K562 (cell line): ENCODE measurements at regions of chrX and their contacts with region 1.

Region 1: GRCh38 chrX:41259516-41259915 is 74.4 kb upstream of the DDX3X start:
- DNase-seq: no peak
- ATAC-seq: peak; percentile 51; the same call in 2 of the 3 replicates
- H3K4me3 ChIP-seq: no peak overlapping the region
- H3K27ac ChIP-seq: no peak overlapping the region
- H3K4me1 ChIP-seq: 0 out of 5 replicates have a peak, but pooled peaks cover 0 to 3% of the 10 kb centered on the region in 2 experiments
- H3K27me3 ChIP-seq: no peaks in the 10 kb centered on the region
- CTCF ChIP-seq: no peak
- EP300 ChIP-seq: no peak
- POLR2A ChIP-seq: no peak
- RAD21 ChIP-seq: peak in 1 of 2 experiments; percentile 8; a peak in 1 of 4 replicates

Region 2: DNA sequence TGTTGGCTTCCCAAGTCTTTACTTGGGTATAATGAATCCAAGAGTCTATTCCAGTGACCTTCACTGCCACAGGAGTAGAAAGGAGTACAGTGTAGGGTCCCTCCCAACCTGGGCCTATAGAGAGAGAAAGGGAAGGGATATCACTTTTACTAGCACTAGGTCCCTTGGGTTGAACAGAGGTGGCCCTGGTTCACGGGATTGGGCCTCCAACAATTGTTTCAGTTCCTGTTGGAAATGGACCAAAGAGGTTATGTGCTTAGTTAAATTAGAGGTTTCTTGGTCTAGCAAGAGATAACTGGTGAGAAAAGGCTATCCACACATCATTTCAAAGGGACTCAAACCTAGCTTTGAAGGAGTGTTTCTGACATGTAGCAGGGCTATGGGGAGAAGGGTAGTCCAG is 467.1 kb before region 1 on chrX:
- CTCF ChIA-PET with region 1: no interaction called
- POLR2A ChIA-PET with region 1: no interaction called
- in situ Hi-C with region 1: no loop called
- intact Hi-C with region 1: loop called (anchors 10 kb)
- DNase-seq: no peak
- ATAC-seq: no peak
- H3K4me3 ChIP-seq: no peak overlapping the region
- H3K27ac ChIP-seq: no peak overlapping the region
- H3K4me1 ChIP-seq: peaks cover 0 to 4% of the 10 kb centered on the region in 2 experiments; a peak in 2 of 5 replicates
- H3K27me3 ChIP-seq: no peaks in the 10 kb centered on the region
- CTCF ChIP-seq: no peak
- EP300 ChIP-seq: no peak
- POLR2A ChIP-seq: no peak
- RAD21 ChIP-seq: no peak